CD4-positive, alpha-beta memory T cell (primary cell): ENCODE measurements at regions of chr19 and their contacts with region 1.

Region 1: GRCh38 chr19:44051654-44052402 is at the start of gene ZNF223:
- DNase-seq: peak; percentile 40 to 51 (median 45)
- H3K4me3 ChIP-seq: peak within 1 kb of the TSS; percentile 61 to 76
- H3K4me3 Mint-ChIP-seq: peak within 1 kb of the TSS; percentile 86 to 97 (median 94)
- H3K27ac ChIP-seq: no peak within 1 kb of the TSS
- H3K27ac Mint-ChIP-seq: peak within 1 kb of the TSS; percentile 27 to 88 (median 84)
- H3K4me1 ChIP-seq: peaks cover 8% of the 10 kb centered on the region
- H3K4me1 Mint-ChIP-seq: peaks cover 18 to 28% (median 26%) of the 10 kb centered on the region in 4 donors
- H3K27me3 ChIP-seq: no peaks in the 10 kb centered on the region
- H3K27me3 Mint-ChIP-seq: peaks cover 3 to 4% of the 10 kb centered on the region in 2 donors
- total RNA-seq, gene ZNF223: 6.8 to 8.0 TPM

Region 2: DNA sequence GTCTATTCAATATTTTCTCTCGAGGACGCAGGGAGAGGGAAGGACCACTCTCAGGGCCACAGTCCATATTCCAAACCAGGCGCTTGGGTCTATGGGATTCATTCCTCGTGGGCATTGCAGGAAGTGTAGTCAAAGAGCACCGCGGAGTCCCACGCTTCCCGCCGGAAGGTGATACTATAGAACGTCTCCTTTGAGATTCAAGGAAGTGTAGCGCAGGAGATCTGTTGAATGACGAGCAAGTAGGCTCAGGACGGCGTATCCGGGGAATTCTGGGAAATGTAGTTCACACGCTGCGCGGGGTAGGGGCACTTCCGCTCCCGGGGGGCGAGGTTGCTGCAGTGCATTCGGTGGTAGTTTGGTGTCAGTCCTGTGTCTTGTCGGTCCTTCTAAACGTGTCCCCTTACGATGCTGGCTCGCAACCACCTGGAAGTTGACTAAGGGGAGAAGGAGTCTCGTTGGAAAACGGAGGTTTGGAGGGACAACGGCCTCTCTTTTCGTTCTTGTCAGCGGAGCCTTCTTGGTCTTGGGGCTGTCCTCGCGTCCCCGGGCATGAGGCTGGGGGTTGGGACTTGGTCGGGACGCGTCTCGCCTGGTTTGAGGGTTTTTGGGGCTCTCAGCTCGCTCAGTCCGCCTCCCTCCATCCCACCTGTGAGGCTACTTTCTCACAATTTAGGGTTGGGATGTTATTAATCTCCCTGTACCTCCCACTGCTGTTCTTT is 20.2 kb after region 1 on chr19 and contains the start of gene ZNF284:
- CTCF ChIA-PET with region 1: no interaction called
- POLR2A ChIA-PET with region 1: interaction called, 3 read pairs
- intact Hi-C with region 1: loop called (anchors 1 kb)
- DNase-seq: peak; percentile 82 to 85 (median 83)
- H3K4me3 ChIP-seq: peak within 1 kb of the TSS; percentile 54 to 76
- H3K4me3 Mint-ChIP-seq: peak within 1 kb of the TSS; percentile 85 to 96 (median 92)
- H3K27ac ChIP-seq: peak within 1 kb of the TSS; percentile 39
- H3K27ac Mint-ChIP-seq: peak within 1 kb of the TSS; percentile 45 to 93 (median 86)
- H3K4me1 ChIP-seq: peaks cover 21% of the 10 kb centered on the region
- H3K4me1 Mint-ChIP-seq: peaks cover 17 to 31% (median 24%) of the 10 kb centered on the region in 4 donors
- H3K27me3 ChIP-seq: no peaks in the 10 kb centered on the region
- H3K27me3 Mint-ChIP-seq: peaks cover 0 to 1% of the 10 kb centered on the region in 2 donors
- total RNA-seq, gene ZNF284: 5.4 to 5.7 TPM